ENCODE measurements at regions of chr14 and their contacts with region 1.

Region 1: DNA sequence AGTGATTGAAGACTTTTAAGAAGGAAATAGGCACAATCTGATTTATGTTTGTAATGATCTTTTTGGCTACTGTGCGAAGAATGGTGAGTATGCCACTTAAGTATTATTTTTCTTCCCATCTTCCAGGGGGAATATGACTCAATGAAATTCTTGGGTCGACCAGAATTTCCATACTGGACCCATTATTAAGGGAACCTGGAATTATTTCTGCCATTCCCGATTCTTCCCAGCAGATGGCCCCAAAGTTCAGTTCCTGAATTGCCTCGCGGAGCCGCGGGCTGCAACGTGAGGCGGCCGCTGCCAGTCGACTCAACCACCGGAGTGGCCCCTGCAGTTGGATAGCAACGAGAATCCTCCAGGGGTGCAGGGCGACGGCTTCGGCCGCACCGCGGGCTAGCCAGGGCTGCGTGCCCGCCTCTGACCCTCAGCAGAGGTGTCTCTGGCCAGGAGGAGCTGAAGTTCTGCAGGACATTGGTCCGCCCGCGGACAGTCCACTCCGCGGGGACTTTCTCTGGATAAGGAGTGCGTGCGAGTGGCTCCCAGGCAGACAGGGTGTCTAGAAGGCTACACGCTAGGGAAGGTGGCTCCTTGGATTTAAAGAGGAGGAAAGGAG is 628 bp upstream of the TSHR start:
- DNase-seq: peak; percentile 57 to 86 (median 68)
- ATAC-seq: peak; percentile 67
- H3K4me3 ChIP-seq: peak overlapping the region; percentile 72
- H3K4me3 Mint-ChIP-seq: peak overlapping the region; percentile 93
- H3K27ac ChIP-seq: no peak overlapping the region
- H3K27ac Mint-ChIP-seq: peak overlapping the region; percentile 29
- H3K4me1 ChIP-seq: peaks cover 15% of the 10 kb centered on the region
- H3K4me1 Mint-ChIP-seq: peaks cover 48% of the 10 kb centered on the region
- H3K27me3 ChIP-seq: no peaks in the 10 kb centered on the region
- H3K27me3 Mint-ChIP-seq: peaks cover 3% of the 10 kb centered on the region
- CTCF ChIP-seq: peak; percentile 90

Region 2: GRCh38 chr14:79363291-79363690 is 1591.5 kb before region 1 on chr14:
- CTCF ChIA-PET with region 1: no interaction called
- POLR2A ChIA-PET with region 1: no interaction called
- intact Hi-C with region 1: no loop called
- DNase-seq: no peak
- ATAC-seq: no peak
- H3K4me3 ChIP-seq: no peak overlapping the region
- H3K4me3 Mint-ChIP-seq: no peak overlapping the region
- H3K27ac ChIP-seq: no peak overlapping the region
- H3K27ac Mint-ChIP-seq: no peak overlapping the region
- H3K4me1 ChIP-seq: no peaks in the 10 kb centered on the region
- H3K4me1 Mint-ChIP-seq: no peaks in the 10 kb centered on the region
- H3K27me3 ChIP-seq: no peaks in the 10 kb centered on the region
- H3K27me3 Mint-ChIP-seq: no peaks in the 10 kb centered on the region
- CTCF ChIP-seq: no peak

Region 3: GRCh38 chr14:80987235-80988032 is 32.6 kb after region 1 on chr14:
- CTCF ChIA-PET with region 1: interaction called, 14 read pairs
- POLR2A ChIA-PET with region 1: interaction called, 14 read pairs
- intact Hi-C with region 1: loop called (anchors 1 kb)
- DNase-seq: peak; percentile 44 to 84 (median 54)
- ATAC-seq: peak; percentile 72
- H3K4me3 ChIP-seq: no peak overlapping the region
- H3K4me3 Mint-ChIP-seq: no peak overlapping the region
- H3K27ac ChIP-seq: no peak overlapping the region
- H3K27ac Mint-ChIP-seq: no peak overlapping the region
- H3K4me1 ChIP-seq: no peaks in the 10 kb centered on the region
- H3K4me1 Mint-ChIP-seq: no peaks in the 10 kb centered on the region
- H3K27me3 ChIP-seq: peaks cover 4 to 11% of the 10 kb centered on the region in 2 experiments
- H3K27me3 Mint-ChIP-seq: no peaks in the 10 kb centered on the region
- CTCF ChIP-seq: peak; percentile 96

Region 4: GRCh38 chr14:81033698-81034240 is 79.0 kb after region 1 on chr14:
- CTCF ChIA-PET with region 1: no interaction called
- POLR2A ChIA-PET with region 1: no interaction called
- intact Hi-C with region 1: no loop called
- DNase-seq: peak in 1 of 14 experiments; percentile 13
- ATAC-seq: no peak
- H3K4me3 ChIP-seq: no peak overlapping the region
- H3K4me3 Mint-ChIP-seq: no peak overlapping the region
- H3K27ac ChIP-seq: no peak overlapping the region
- H3K27ac Mint-ChIP-seq: no peak overlapping the region
- H3K4me1 ChIP-seq: no peaks in the 10 kb centered on the region
- H3K4me1 Mint-ChIP-seq: no peaks in the 10 kb centered on the region
- H3K27me3 ChIP-seq: no peaks in the 10 kb centered on the region
- H3K27me3 Mint-ChIP-seq: peaks cover 16% of the 10 kb centered on the region
- CTCF ChIP-seq: no peak

Region 5: DNA sequence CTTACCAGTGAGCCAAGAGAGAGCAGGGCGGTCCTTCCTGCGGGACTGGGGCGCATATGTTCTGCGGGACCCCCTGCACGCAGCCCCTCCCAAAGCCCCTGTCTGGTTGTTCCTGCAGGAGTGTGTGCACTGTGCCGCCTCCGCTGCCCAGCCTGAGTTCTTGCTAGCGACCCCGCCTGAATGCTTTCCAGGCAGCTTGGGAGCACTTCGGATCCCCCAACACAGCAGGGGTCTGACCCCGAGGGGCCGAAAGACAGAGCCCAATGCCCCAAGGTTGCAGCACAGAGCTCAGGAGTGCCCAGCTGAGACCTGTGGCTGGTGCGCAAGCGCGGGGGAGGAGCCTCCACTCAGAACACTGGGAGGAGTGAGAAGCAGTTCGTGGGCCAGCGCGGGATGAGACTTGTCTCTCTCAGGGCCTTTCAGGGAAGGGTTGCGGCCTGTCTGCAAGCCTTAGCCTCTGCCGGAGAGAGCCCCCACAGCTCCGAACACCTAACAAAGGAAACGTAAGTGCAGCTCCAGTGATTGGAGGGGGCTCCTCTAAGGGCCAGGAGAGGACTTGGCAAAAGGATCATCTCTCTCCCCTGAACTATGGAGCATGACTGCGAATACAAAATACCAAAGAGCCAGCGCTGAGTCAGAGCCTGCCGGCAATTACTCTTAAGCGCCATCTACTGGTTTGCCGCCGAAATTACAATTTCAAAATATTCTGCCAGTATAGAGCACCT is 215.5 kb after region 1 on chr14:
- CTCF ChIA-PET with region 1: no interaction called
- POLR2A ChIA-PET with region 1: no interaction called
- intact Hi-C with region 1: loop called (anchors 1 to 2 kb)
- DNase-seq: peak; percentile 79 to 93 (median 86)
- ATAC-seq: peak; percentile 97
- H3K4me3 ChIP-seq: peak overlapping the region; percentile 82
- H3K4me3 Mint-ChIP-seq: peak overlapping the region; percentile 88
- H3K27ac ChIP-seq: peak overlapping the region; percentile 58 to 72
- H3K27ac Mint-ChIP-seq: peak overlapping the region; percentile 94
- H3K4me1 ChIP-seq: peaks cover 20% of the 10 kb centered on the region
- H3K4me1 Mint-ChIP-seq: peaks cover 28% of the 10 kb centered on the region
- H3K27me3 ChIP-seq: no peaks in the 10 kb centered on the region
- H3K27me3 Mint-ChIP-seq: no peaks in the 10 kb centered on the region
- CTCF ChIP-seq: peak; percentile 86

Region 6: GRCh38 chr14:81211844-81212243 is 257.1 kb after region 1 on chr14:
- CTCF ChIA-PET with region 1: no interaction called
- POLR2A ChIA-PET with region 1: no interaction called
- intact Hi-C with region 1: loop called (anchors 5 kb)
- DNase-seq: peak in 8 of 14 experiments; percentile 15 to 69 (median 27)
- ATAC-seq: peak; percentile 80
- H3K4me3 ChIP-seq: no peak overlapping the region
- H3K4me3 Mint-ChIP-seq: no peak overlapping the region
- H3K27ac ChIP-seq: no peak overlapping the region
- H3K27ac Mint-ChIP-seq: no peak overlapping the region
- H3K4me1 ChIP-seq: peaks cover 9% of the 10 kb centered on the region
- H3K4me1 Mint-ChIP-seq: peaks cover 63% of the 10 kb centered on the region
- H3K27me3 ChIP-seq: no peaks in the 10 kb centered on the region
- H3K27me3 Mint-ChIP-seq: no peaks in the 10 kb centered on the region
- CTCF ChIP-seq: peak; percentile 46

Region 7: DNA sequence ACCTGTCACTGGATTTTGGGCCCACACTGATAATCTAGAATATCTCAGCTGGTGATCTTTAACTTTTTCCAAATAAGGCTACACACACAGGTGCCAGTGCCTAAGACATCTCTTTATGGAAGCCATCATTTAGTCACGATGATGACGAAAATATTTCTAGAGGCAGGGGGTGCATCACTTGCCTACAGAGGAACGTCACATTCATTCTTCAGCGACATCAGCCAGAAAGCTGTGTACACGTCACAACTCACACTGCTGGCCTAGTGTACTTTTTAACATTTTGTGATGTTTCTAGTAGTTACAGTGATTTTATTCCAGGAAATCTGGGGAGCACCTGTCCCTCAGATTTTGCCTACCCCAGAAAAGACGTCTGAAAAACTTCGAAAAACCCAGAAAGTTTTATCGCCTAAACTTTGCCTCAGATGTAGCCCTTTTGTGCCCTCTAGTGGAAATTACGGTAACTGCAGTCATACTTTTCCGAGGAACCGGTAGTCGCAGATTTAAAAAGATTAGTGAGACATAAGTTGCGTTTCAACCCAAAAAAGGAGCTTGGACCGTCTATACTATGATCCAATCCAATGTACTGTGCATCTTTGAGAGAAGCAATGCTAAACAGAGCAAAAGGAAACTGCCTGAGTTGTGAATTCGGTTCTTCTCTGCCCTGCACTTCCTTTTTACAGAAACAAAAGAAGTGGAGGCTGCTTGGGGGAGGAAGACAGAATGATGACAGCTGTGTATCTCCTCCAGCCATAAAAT is 509.6 kb after region 1 on chr14:
- CTCF ChIA-PET with region 1: no interaction called
- POLR2A ChIA-PET with region 1: no interaction called
- intact Hi-C with region 1: loop called (anchors 2 to 5 kb)
- DNase-seq: peak in 13 of 14 experiments; percentile 10 to 86 (median 47)
- ATAC-seq: peak; percentile 80
- H3K4me3 ChIP-seq: peak overlapping the region; percentile 66
- H3K4me3 Mint-ChIP-seq: peak overlapping the region; percentile 86
- H3K27ac ChIP-seq: peak overlapping the region in 1 of 2 donors; percentile 36
- H3K27ac Mint-ChIP-seq: peak overlapping the region; percentile 86
- H3K4me1 ChIP-seq: peaks cover 4% of the 10 kb centered on the region
- H3K4me1 Mint-ChIP-seq: peaks cover 8% of the 10 kb centered on the region
- H3K27me3 ChIP-seq: no peaks in the 10 kb centered on the region
- H3K27me3 Mint-ChIP-seq: no peaks in the 10 kb centered on the region
- CTCF ChIP-seq: peak; percentile 93

Region 8: GRCh38 chr14:82009076-82009475 is 1054.3 kb after region 1 on chr14:
- CTCF ChIA-PET with region 1: no interaction called
- POLR2A ChIA-PET with region 1: no interaction called
- intact Hi-C with region 1: no loop called
- DNase-seq: no peak
- ATAC-seq: no peak
- H3K4me3 ChIP-seq: no peak overlapping the region
- H3K4me3 Mint-ChIP-seq: no peak overlapping the region
- H3K27ac ChIP-seq: no peak overlapping the region
- H3K27ac Mint-ChIP-seq: no peak overlapping the region
- H3K4me1 ChIP-seq: no peaks in the 10 kb centered on the region
- H3K4me1 Mint-ChIP-seq: no peaks in the 10 kb centered on the region
- H3K27me3 ChIP-seq: no peaks in the 10 kb centered on the region
- H3K27me3 Mint-ChIP-seq: no peaks in the 10 kb centered on the region
- CTCF ChIP-seq: no peak